PC-9 (cell line): ENCODE measurements at regions of chr10 and their contacts with region 1.

Region 1: GRCh38 chr10:33291053-33291592 is 43.3 kb downstream of the NRP1 start:
- DNase-seq: peak; percentile 37 to 91
- H3K4me3 ChIP-seq: peak overlapping the region; percentile 31; the same call in 1 of the 2 replicates
- H3K27ac ChIP-seq: peak overlapping the region; percentile 99
- H3K4me1 ChIP-seq: peaks cover 48% of the 10 kb centered on the region
- H3K27me3 ChIP-seq: no peaks in the 10 kb centered on the region
- CTCF ChIP-seq: no peak

Region 2: GRCh38 chr10:33237736-33238624 is 53.1 kb before region 1 on chr10:
- CTCF ChIA-PET with region 1: no interaction called
- POLR2A ChIA-PET with region 1: interaction called, 5 read pairs
- intact Hi-C with region 1: loop called (anchors 1 kb)
- DNase-seq: peak; percentile 72 to 94
- H3K4me3 ChIP-seq: no peak overlapping the region
- H3K27ac ChIP-seq: peak overlapping the region; percentile 89
- H3K4me1 ChIP-seq: peaks cover 56% of the 10 kb centered on the region
- H3K27me3 ChIP-seq: no peaks in the 10 kb centered on the region
- CTCF ChIP-seq: no peak

Region 3: GRCh38 chr10:33265621-33266020 is 25.5 kb before region 1 on chr10:
- CTCF ChIA-PET with region 1: no interaction called
- POLR2A ChIA-PET with region 1: no interaction called
- intact Hi-C with region 1: loop called (anchors 2 kb)
- DNase-seq: no peak
- H3K4me3 ChIP-seq: no peak overlapping the region
- H3K27ac ChIP-seq: peak overlapping the region; percentile 90
- H3K4me1 ChIP-seq: peaks cover 40% of the 10 kb centered on the region
- H3K27me3 ChIP-seq: no peaks in the 10 kb centered on the region
- CTCF ChIP-seq: no peak